B cell (primary cell): ENCODE measurements at regions of chr20 and their contacts with region 1.

Region 1: DNA sequence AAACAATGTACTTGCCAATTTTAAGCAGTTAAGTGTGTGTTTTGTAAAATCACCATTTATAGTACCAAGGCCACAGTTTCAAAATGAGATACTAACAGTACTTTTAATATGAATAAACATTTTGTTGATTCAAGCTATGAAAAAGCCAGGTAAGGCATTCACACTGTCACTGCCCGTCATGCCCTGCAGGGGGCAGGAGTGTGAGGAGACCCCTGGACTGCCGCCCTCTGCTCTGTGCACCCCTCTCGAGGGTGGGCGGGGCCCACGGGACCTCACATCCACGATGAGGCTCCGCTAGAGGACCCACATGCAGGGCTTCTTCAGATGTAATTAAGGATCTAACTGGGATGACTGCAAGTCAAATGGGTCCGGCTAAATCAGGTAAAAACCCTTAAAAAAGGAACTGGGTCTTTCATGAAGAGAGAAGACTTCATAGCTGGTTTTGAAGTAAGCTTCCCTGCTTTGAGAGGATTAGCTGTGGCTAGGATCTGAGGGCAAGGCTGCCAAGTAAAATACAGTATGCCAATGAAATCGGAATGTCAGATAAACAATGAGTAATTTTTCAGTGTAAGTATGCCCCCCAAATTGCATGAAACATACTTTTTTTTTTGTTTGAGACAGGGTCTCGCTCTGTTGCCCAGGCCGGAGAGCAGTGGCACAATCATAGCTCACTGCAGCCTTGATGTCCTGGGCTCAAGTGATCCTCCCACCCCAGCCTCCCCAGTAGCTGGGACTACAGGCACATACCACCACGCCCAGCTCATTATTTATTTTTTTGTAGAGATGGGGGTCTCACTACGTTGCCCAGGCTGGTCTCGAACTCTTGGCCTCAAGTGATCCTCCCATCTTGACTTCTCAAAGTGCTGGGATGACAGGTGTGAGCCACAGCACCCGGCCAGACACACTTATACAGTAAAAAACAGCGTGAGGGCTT is 18.7 kb downstream of the DIDO1 start:
- DNase-seq: peak; percentile 54
- ATAC-seq: peak; percentile 67
- H3K4me3 ChIP-seq: no peak overlapping the region
- H3K4me3 Mint-ChIP-seq: no peak overlapping the region
- H3K27ac ChIP-seq: no peak overlapping the region
- H3K27ac Mint-ChIP-seq: peak overlapping the region; percentile 20
- H3K4me1 ChIP-seq: no peaks in the 10 kb centered on the region
- H3K4me1 Mint-ChIP-seq: peaks cover 3% of the 10 kb centered on the region
- H3K27me3 ChIP-seq: no peaks in the 10 kb centered on the region
- H3K27me3 Mint-ChIP-seq: no peaks in the 10 kb centered on the region
- CTCF ChIP-seq: peak; percentile 82

Region 2: DNA sequence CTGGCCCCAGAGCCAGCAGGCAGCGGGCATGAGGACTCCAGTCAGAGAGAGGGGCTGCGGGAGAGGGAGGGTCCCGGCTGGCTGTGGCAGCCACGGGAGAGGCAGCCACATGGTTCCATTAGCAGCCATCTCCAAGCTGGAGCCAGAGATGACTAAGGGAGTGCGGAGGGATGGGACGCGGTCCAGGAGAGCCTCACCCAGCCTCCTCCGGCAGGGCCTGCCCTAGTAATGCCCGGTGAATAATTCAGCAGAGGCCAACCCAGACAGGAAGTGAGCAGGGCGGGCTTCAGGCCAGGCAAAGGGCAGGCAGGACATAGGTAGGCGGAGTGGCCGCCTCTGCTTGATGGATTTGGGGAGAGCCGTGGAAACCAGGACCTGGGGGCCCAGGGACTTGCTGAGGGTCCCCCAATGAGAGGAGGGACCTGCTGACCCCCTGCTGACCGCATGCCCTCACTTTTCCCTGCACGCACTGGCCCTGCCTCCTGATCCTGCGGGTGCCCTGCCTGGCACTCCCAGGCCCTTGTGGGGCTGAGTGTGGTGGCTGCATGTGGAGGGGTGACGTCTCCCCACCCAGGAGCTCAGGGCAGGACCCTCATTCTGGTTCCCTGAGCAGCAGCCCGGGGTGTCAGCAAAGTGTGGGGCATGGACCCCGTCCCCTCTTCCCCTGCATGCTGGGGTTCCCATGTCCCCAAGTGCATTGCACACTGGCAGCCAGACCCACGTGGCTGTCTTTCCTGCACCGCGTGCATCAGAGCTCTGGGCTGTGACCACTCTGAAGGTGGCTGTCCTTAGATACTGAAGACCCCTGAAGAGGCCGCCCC is 317.1 kb before region 1 on chr20:
- CTCF ChIA-PET with region 1: no interaction called
- POLR2A ChIA-PET with region 1: no interaction called
- intact Hi-C with region 1: no loop called
- DNase-seq: no peak
- ATAC-seq: no peak
- H3K4me3 ChIP-seq: no peak overlapping the region
- H3K4me3 Mint-ChIP-seq: no peak overlapping the region
- H3K27ac ChIP-seq: no peak overlapping the region
- H3K27ac Mint-ChIP-seq: no peak overlapping the region
- H3K4me1 ChIP-seq: no peaks in the 10 kb centered on the region
- H3K4me1 Mint-ChIP-seq: peaks cover 4% of the 10 kb centered on the region
- H3K27me3 ChIP-seq: peaks cover 0 to 23% (median 3%) of the 10 kb centered on the region in 4 experiments
- H3K27me3 Mint-ChIP-seq: peaks cover 33% of the 10 kb centered on the region
- CTCF ChIP-seq: no peak

Region 3: GRCh38 chr20:62837800-62838454 is 69.7 kb before region 1 on chr20:
- CTCF ChIA-PET with region 1: no interaction called
- POLR2A ChIA-PET with region 1: no interaction called
- intact Hi-C with region 1: no loop called
- DNase-seq: no peak
- ATAC-seq: peak; percentile 86
- H3K4me3 ChIP-seq: peak overlapping the region in 1 of 5 experiments; percentile 1
- H3K4me3 Mint-ChIP-seq: peak overlapping the region; percentile 81
- H3K27ac ChIP-seq: peak overlapping the region; percentile 58 to 81
- H3K27ac Mint-ChIP-seq: peak overlapping the region; percentile 96
- H3K4me1 ChIP-seq: peaks cover 20 to 27% of the 10 kb centered on the region in 2 donors
- H3K4me1 Mint-ChIP-seq: peaks cover 28% of the 10 kb centered on the region
- H3K27me3 ChIP-seq: no peaks in the 10 kb centered on the region
- H3K27me3 Mint-ChIP-seq: no peaks in the 10 kb centered on the region
- CTCF ChIP-seq: no peak

Region 4: GRCh38 chr20:62876902-62877816 is 30.5 kb before region 1 on chr20:
- CTCF ChIA-PET with region 1: no interaction called
- POLR2A ChIA-PET with region 1: no interaction called
- intact Hi-C with region 1: no loop called
- DNase-seq: no peak
- ATAC-seq: no peak
- H3K4me3 ChIP-seq: no peak overlapping the region
- H3K4me3 Mint-ChIP-seq: no peak overlapping the region
- H3K27ac ChIP-seq: no peak overlapping the region
- H3K27ac Mint-ChIP-seq: no peak overlapping the region
- H3K4me1 ChIP-seq: peaks cover 0 to 5% of the 10 kb centered on the region in 2 donors
- H3K4me1 Mint-ChIP-seq: peaks cover 9% of the 10 kb centered on the region
- H3K27me3 ChIP-seq: peaks cover 0 to 8% (median 1%) of the 10 kb centered on the region in 4 experiments
- H3K27me3 Mint-ChIP-seq: peaks cover 1% of the 10 kb centered on the region
- CTCF ChIP-seq: no peak

Region 5: DNA sequence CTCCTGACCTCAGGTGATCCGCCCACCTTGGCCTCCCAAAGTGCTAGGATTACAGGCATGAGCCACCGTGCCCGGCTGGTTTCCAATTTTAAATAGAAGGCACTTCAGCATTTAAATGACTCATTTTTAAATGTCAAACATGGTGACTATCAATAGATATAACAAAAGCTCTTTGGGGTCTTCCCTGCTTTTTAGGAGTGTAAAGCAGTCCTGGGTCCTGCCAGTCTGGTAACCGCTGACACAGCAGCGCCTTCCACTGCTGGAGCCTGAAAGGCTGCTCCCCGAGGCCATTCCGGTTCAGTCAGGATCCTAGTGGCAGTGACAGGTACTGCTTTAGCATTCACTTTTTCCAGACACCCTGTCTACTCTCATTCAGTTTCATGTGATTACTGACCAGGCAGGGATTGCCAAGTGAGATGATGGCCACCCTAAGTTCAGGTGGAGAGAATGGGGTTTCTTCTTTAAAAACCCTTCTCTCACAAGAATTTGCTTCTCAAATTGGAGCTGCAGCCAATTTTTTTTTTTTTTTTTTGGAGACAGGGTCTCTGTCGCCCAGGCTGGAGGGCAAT is 13.6 kb after region 1 on chr20:
- CTCF ChIA-PET with region 1: interaction called, 22 read pairs
- POLR2A ChIA-PET with region 1: interaction called, 3 read pairs
- intact Hi-C with region 1: no loop called
- DNase-seq: peak; percentile 61
- ATAC-seq: no peak
- H3K4me3 ChIP-seq: no peak overlapping the region
- H3K4me3 Mint-ChIP-seq: peak overlapping the region; percentile 73
- H3K27ac ChIP-seq: no peak overlapping the region
- H3K27ac Mint-ChIP-seq: no peak overlapping the region
- H3K4me1 ChIP-seq: peaks cover 80 to 82% of the 10 kb centered on the region in 2 donors
- H3K4me1 Mint-ChIP-seq: peaks cover 79% of the 10 kb centered on the region
- H3K27me3 ChIP-seq: no peaks in the 10 kb centered on the region
- H3K27me3 Mint-ChIP-seq: no peaks in the 10 kb centered on the region
- CTCF ChIP-seq: peak; percentile 61

Region 6: GRCh38 chr20:62937366-62938104 is 29.9 kb after region 1 on chr20:
- CTCF ChIA-PET with region 1: interaction called, 12 read pairs
- POLR2A ChIA-PET with region 1: no interaction called
- intact Hi-C with region 1: no loop called
- DNase-seq: peak; percentile 97
- ATAC-seq: peak; percentile 90
- H3K4me3 ChIP-seq: peak overlapping the region; percentile 53 to 100 (median 81)
- H3K4me3 Mint-ChIP-seq: peak overlapping the region; percentile 89
- H3K27ac ChIP-seq: peak overlapping the region; percentile 91 to 93
- H3K27ac Mint-ChIP-seq: peak overlapping the region; percentile 92
- H3K4me1 ChIP-seq: peaks cover 26 to 42% of the 10 kb centered on the region in 2 donors
- H3K4me1 Mint-ChIP-seq: peaks cover 36% of the 10 kb centered on the region
- H3K27me3 ChIP-seq: no peaks in the 10 kb centered on the region
- H3K27me3 Mint-ChIP-seq: no peaks in the 10 kb centered on the region
- CTCF ChIP-seq: no peak